ENCODE measurements at regions of chr7 and their contacts with region 1.

Region 1: DNA sequence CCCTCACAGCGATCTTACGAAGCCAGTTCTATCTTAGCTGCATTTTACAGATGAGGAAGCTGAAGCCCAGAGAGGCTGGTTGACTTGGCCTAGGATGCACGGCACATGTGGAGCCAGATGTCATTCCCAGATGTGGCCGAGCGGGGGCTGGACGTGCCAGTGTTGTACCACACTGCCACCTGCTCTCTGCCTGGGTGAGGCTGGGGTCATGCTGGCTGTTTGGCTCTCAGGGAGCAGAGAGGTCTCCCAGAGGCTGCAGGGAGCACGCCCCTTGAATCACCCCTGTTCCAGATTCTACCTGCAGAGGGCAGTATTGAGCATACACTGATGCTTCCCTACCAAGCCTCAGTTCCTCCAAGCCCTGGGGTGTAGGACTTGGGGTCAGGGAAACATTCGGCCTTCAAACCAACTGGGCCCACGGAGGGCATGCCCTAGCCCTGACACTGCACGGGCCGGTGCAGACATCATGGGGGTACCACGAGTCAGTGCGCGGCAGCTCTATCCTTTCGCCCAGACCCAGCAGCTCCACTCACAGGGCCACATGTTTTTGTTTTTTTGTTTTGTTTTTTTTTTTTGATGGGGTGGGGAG is 3.8 kb upstream of the GTF2IRD1 start:
- DNase-seq: peak; percentile 60
- H3K4me3 ChIP-seq: no peak overlapping the region
- H3K27ac ChIP-seq: no peak overlapping the region
- H3K4me1 ChIP-seq: peaks cover 9% of the 10 kb centered on the region
- H3K27me3 ChIP-seq: no peaks in the 10 kb centered on the region
- CTCF ChIP-seq: peak; percentile 79 to 82
- POLR2A ChIP-seq: no peak

Region 2: DNA sequence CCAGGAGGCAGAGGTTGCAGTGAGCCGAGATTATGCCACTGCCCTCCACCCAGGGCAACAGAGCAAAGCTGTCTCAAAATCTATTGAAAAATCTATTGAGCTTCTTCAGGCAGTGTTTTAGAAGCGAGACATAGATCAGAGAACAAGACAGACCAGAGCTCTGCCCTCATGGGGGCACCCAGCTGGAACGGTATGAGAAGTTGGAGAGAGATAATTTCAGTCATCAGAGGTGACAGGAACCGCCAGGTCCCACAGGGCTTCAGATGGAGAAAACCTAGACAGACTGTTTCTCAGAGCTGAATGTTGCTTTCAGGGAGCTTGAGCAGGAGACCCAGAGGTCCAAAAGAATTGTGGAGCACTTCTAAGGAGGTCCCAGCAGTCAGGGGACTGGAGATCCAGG is 10.4 kb before region 1 on chr7:
- CTCF ChIA-PET with region 1: interaction called, 12 read pairs
- POLR2A ChIA-PET with region 1: interaction called, 4 read pairs
- dilution Hi-C with region 1: no loop called
- intact Hi-C with region 1: no loop called
- DNase-seq: no peak
- H3K4me3 ChIP-seq: no peak overlapping the region
- H3K27ac ChIP-seq: no peak overlapping the region
- H3K4me1 ChIP-seq: no peaks in the 10 kb centered on the region
- H3K27me3 ChIP-seq: no peaks in the 10 kb centered on the region
- CTCF ChIP-seq: no peak
- POLR2A ChIP-seq: no peak

Region 3: DNA sequence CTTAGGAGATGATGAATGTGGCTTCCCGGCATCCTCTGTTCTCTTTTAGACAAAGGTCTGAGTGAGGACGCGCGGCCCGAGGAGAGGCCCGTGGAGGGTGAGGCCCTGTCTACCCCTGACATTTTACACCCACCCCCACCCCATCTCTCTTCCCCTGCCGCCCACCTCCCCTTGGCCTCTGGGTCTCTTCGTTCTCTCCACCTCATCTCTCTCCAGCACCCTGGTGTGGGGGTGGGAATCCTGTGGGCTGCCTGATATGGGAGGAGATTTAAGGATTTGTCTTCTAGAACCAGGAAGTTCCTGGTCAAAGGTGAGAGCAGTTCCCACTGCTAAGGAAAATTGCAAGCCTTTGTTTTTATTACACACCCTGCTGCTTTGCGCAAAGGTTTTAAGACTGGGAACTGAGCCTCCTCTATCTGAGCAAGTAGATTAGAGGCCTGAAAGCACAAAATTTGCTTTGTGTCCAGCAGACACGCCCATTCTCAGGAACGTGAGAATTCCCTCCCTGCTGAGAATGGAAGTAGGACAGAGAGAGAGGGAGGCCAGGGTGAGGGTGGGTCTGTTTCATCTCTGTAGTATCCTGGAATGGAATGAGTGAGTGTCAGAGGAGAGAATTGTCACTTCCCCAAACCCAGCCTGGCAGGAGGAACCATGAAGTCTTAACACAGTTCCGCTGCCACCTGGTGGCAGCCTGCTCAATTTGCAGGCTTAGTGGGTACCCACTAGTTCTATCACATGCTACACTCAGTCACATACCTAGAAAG is 95.0 kb after region 1 on chr7:
- CTCF ChIA-PET with region 1: interaction called, 4 read pairs
- POLR2A ChIA-PET with region 1: no interaction called
- dilution Hi-C with region 1: no loop called
- intact Hi-C with region 1: loop called (anchors 1 kb)
- DNase-seq: peak; percentile 22
- H3K4me3 ChIP-seq: no peak overlapping the region
- H3K27ac ChIP-seq: no peak overlapping the region
- H3K4me1 ChIP-seq: no peaks in the 10 kb centered on the region
- H3K27me3 ChIP-seq: no peaks in the 10 kb centered on the region
- CTCF ChIP-seq: peak; percentile 42 to 56
- POLR2A ChIP-seq: no peak

Region 4: DNA sequence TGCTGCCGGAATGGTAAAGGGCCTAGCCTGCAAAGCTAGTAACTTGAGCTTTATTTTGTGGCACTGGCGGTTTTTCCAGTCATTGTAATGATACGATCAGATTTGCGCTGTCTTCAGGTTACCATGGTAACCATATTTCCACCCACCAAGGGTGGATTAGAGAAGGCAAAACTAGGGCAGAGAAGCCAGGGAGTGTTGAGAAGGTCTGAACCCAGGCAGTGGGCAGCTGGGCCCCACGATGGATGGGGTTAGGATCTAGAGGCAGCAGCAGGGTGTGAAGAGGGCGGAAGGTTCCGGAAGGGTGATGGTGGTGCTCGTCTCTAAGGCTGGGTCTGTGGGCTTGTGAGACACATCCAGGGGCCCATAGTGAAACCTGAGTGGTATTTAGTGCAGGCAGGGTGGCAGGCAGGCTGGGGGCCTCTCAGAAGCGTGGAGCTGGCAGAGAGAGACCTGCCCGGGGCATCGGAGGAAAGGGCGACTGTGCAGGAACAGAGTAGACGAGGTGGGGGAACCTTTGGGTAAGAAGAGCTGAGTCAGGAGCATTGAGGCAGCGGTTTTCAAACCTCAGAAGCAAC is 119.7 kb after region 1 on chr7:
- CTCF ChIA-PET with region 1: interaction called, 25 read pairs
- POLR2A ChIA-PET with region 1: no interaction called
- dilution Hi-C with region 1: no loop called
- intact Hi-C with region 1: loop called (anchors 1 kb)
- DNase-seq: no peak
- H3K4me3 ChIP-seq: no peak overlapping the region
- H3K27ac ChIP-seq: no peak overlapping the region
- H3K4me1 ChIP-seq: no peaks in the 10 kb centered on the region
- H3K27me3 ChIP-seq: no peaks in the 10 kb centered on the region
- CTCF ChIP-seq: no peak
- POLR2A ChIP-seq: no peak

Region 5: DNA sequence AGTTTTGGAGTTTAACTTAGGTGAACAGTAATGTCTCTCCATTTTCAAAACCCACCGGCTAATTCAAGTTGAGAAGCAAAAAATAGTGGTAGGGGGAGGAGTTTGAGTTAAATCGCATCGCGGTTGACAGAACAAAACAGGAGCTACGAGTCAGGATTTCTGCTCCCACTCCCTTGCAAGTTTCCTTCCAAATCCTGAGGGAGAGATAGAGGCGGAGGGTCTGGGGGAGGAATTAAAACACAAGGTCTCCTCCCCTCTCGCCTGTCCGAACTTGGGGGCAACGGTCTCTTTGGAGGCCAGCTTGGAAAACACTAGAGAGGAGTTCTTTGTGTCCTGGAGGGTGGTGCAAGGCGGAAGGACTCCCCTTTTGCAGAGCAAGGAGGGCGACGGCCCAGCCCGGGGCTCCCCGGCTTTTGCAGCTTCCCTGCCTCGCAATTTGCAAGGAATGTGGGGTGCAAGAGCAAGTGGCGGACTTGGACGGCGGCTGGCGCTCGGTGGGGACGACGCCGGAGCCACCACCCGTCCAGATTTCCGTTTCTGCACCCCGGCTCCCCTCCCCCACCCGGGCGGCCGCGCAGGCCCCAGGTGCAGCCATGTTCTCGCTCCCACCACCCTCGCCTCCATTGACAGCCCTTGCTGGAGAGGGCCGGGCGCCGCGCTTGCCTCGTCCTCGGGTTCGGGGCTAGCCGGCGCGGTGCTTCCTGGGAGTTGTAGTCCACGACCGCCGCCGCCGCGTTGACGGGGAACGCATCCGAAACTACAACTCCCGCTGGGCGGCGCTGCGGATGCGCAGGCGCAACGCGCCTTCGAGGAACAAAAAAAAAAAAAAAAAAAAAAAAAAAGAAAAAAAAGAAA is 207.2 kb after region 1 on chr7:
- CTCF ChIA-PET with region 1: no interaction called
- POLR2A ChIA-PET with region 1: no interaction called
- dilution Hi-C with region 1: no loop called
- intact Hi-C with region 1: loop called (anchors 10 kb)
- DNase-seq: peak; percentile 97
- H3K4me3 ChIP-seq: peak overlapping the region; percentile 83 to 97 (median 87)
- H3K27ac ChIP-seq: peak overlapping the region; percentile 55
- H3K4me1 ChIP-seq: peaks cover 34% of the 10 kb centered on the region
- H3K27me3 ChIP-seq: no peaks in the 10 kb centered on the region
- CTCF ChIP-seq: peak in 1 of 2 donors; percentile 19
- POLR2A ChIP-seq: peak; percentile 66

Region 6: GRCh38 chr7:74672343-74672915 is 222.5 kb after region 1 on chr7:
- CTCF ChIA-PET with region 1: no interaction called
- POLR2A ChIA-PET with region 1: no interaction called
- dilution Hi-C with region 1: no loop called
- intact Hi-C with region 1: no loop called
- DNase-seq: no peak
- H3K4me3 ChIP-seq: no peak overlapping the region
- H3K27ac ChIP-seq: no peak overlapping the region
- H3K4me1 ChIP-seq: no peaks in the 10 kb centered on the region
- H3K27me3 ChIP-seq: no peaks in the 10 kb centered on the region
- CTCF ChIP-seq: no peak
- POLR2A ChIP-seq: no peak

Measured in endothelial cell of umbilical vein (primary cell).